ENCODE measurements at regions of chr5 and their contacts with region 1.

Region 1: GRCh38 chr5:33888587-33888986 is 3.2 kb downstream of the ADAMTS12 start:
- DNase-seq: no peak
- H3K4me3 ChIP-seq: no peak overlapping the region
- H3K27ac ChIP-seq: no peak overlapping the region
- H3K4me1 ChIP-seq: peaks cover 0 to 16% of the 10 kb centered on the region in 2 donors
- H3K27me3 ChIP-seq: no peaks in the 10 kb centered on the region
- CTCF ChIP-seq: no peak
- POLR2A ChIP-seq: no peak

Region 2: GRCh38 chr5:33832404-33833236 is 56.0 kb before region 1 on chr5:
- intact Hi-C with region 1: loop called in 1 of 2 experiments (anchors 10 kb)
- DNase-seq: no peak
- H3K4me3 ChIP-seq: no peak overlapping the region
- H3K27ac ChIP-seq: peak overlapping the region in 1 of 5 donors; percentile 31
- H3K4me1 ChIP-seq: peaks cover 0 to 10% of the 10 kb centered on the region in 2 donors
- H3K27me3 ChIP-seq: no peaks in the 10 kb centered on the region
- CTCF ChIP-seq: no peak
- POLR2A ChIP-seq: no peak